ENCODE measurements at regions of chr6 and their contacts with region 1.

Region 1: GRCh38 chr6:45350186-45350710 is 22.1 kb downstream of the RUNX2 start:
- DNase-seq: no peak
- ATAC-seq: no peak
- H3K4me3 ChIP-seq: no peak overlapping the region
- H3K4me3 Mint-ChIP-seq: no peak overlapping the region
- H3K27ac ChIP-seq: no peak overlapping the region
- H3K27ac Mint-ChIP-seq: no peak overlapping the region
- H3K4me1 ChIP-seq: no peaks in the 10 kb centered on the region
- H3K4me1 Mint-ChIP-seq: peaks cover 3 to 20% (median 12%) of the 10 kb centered on the region in 7 donors
- H3K27me3 ChIP-seq: no peaks in the 10 kb centered on the region
- H3K27me3 Mint-ChIP-seq: no peaks in the 10 kb centered on the region

Region 2: GRCh38 chr6:45369870-45370269 is 19.6 kb after region 1 on chr6:
- CTCF ChIA-PET with region 1: no interaction called
- POLR2A ChIA-PET with region 1: no interaction called
- intact Hi-C with region 1: loop called in 1 of 2 experiments (anchors 2 kb)
- DNase-seq: no peak
- ATAC-seq: no peak
- H3K4me3 ChIP-seq: no peak overlapping the region
- H3K4me3 Mint-ChIP-seq: no peak overlapping the region
- H3K27ac ChIP-seq: no peak overlapping the region
- H3K27ac Mint-ChIP-seq: peak overlapping the region in 1 of 9 donors; percentile 20
- H3K4me1 ChIP-seq: no peaks in the 10 kb centered on the region
- H3K4me1 Mint-ChIP-seq: peaks cover 0 to 25% (median 9%) of the 10 kb centered on the region in 7 donors
- H3K27me3 ChIP-seq: no peaks in the 10 kb centered on the region
- H3K27me3 Mint-ChIP-seq: no peaks in the 10 kb centered on the region

Region 3: GRCh38 chr6:45398075-45398839 is 48.0 kb after region 1 on chr6:
- CTCF ChIA-PET with region 1: no interaction called
- POLR2A ChIA-PET with region 1: no interaction called
- intact Hi-C with region 1: loop called in 1 of 2 experiments (anchors 2 kb)
- DNase-seq: no peak
- ATAC-seq: no peak
- H3K4me3 ChIP-seq: no peak overlapping the region
- H3K4me3 Mint-ChIP-seq: no peak overlapping the region
- H3K27ac ChIP-seq: no peak overlapping the region
- H3K27ac Mint-ChIP-seq: no peak overlapping the region
- H3K4me1 ChIP-seq: no peaks in the 10 kb centered on the region
- H3K4me1 Mint-ChIP-seq: peaks cover 0 to 2% (median 0%) of the 10 kb centered on the region in 7 donors
- H3K27me3 ChIP-seq: no peaks in the 10 kb centered on the region
- H3K27me3 Mint-ChIP-seq: peaks cover 0 to 18% (median 13%) of the 10 kb centered on the region in 5 donors